ENCODE measurements at regions of chr17 and their contacts with region 1.

Region 1: DNA sequence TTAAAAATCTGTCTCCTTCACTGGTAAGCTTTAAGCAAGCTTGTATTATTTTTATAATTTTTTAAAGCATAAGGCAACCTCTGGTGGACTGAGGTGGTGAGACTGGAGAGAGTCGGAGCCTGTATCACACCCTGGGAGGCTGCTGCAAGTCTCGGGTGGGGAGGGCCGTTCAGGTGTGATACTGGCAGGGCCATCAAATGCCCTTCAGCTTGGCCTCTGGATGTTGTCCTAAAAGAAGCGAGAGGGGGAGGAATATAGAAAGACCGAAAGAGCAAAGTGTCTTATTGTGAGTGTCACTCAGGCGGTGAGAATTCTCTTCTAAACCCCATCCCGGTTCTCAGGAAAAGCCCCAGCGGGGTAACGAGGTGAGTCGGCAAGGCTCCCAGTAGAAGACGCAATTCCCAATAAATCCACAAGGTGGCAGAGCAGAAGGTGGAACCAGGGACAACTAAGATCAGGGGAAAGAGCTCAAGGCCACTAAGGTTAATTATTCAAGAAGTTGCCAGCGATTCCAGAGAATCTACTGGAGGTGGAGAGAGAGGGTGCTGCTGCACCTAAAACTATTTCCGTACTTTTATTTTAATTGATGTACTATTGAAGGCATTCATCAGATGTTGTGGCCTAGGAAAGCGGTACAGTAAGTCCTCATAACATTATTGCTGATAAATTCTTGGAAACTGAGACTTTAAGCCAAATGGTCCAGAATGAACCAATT is 14.1 kb downstream of the C17orf67 start:
- DNase-seq: peak; percentile 18
- H3K4me3 ChIP-seq: no peak overlapping the region
- H3K27ac ChIP-seq: no peak overlapping the region
- H3K27me3 ChIP-seq: no peaks in the 10 kb centered on the region
- CTCF ChIP-seq: peak; percentile 80

Region 2: DNA sequence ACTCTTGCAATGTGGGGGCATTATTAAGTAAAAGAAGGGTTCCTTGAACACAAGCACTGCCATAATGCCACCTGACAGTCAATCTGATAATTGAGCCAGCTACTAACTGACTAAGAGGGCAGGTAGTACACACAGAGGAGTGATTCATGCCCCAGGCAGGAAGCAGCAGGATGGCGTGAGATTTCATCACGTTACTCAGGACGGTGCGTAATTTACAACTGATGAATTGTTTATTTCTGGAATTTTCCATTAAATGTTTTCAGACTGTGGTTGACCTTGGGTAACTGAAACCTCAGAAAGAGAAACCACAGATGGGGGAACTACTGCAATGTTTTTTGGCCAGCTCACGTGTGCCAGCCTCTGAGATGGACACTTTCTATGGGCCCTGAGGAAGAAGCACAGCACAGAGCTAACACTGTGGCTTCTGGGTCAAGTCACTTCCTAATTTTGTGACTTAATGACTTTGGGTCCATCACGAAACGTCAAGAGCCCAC is 32.6 kb before region 1 on chr17:
- CTCF ChIA-PET with region 1: interaction called, 11 read pairs
- POLR2A ChIA-PET with region 1: interaction called, 5 read pairs
- DNase-seq: peak; percentile 91
- H3K4me3 ChIP-seq: no peak overlapping the region
- H3K27ac ChIP-seq: peak overlapping the region; percentile 79
- H3K27me3 ChIP-seq: no peaks in the 10 kb centered on the region
- CTCF ChIP-seq: no peak

Region 3: GRCh38 chr17:56808503-56808902 is 11.1 kb before region 1 on chr17:
- CTCF ChIA-PET with region 1: interaction called, 17 read pairs
- POLR2A ChIA-PET with region 1: no interaction called
- DNase-seq: no peak
- H3K4me3 ChIP-seq: no peak overlapping the region
- H3K27ac ChIP-seq: no peak overlapping the region
- H3K27me3 ChIP-seq: no peaks in the 10 kb centered on the region
- CTCF ChIP-seq: no peak

Region 4: GRCh38 chr17:56833809-56834379 is 14.3 kb after region 1 on chr17 and contains the starts of genes C17orf67 and DGKE:
- CTCF ChIA-PET with region 1: interaction called, 28 read pairs
- POLR2A ChIA-PET with region 1: no interaction called
- DNase-seq: peak; percentile 88
- H3K4me3 ChIP-seq: peak within 1 kb of the TSS; percentile 89
- H3K27ac ChIP-seq: peak within 1 kb of the TSS; percentile 41
- H3K27me3 ChIP-seq: no peaks in the 10 kb centered on the region
- CTCF ChIP-seq: no peak
- polyA plus RNA-seq, gene C17orf67: 0.42 and 0.76 TPM in 2 replicates
- polyA plus RNA-seq, gene DGKE: 2.3 and 3.2 TPM in 2 replicates

Region 5: DNA sequence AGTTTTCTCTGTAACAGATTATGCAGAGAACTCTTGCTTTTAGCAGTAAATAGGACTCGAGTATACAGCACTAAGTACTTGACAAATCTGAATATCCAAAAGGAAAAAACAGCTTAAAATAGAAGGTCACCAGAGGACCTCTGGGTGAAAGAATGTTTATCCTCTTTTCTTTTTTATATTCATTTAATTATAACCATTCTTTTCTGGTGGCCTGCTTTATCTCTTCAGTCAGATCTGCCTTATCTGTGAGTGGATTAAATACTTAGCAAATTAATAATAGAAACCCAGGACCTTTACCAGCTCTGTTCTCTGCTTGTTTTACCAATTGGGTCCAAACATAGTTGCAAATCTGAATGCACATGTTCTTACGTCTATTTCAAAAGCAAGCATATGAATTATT is 23.0 kb after region 1 on chr17:
- CTCF ChIA-PET with region 1: interaction called, 18 read pairs
- POLR2A ChIA-PET with region 1: no interaction called
- DNase-seq: no peak
- H3K4me3 ChIP-seq: no peak overlapping the region
- H3K27ac ChIP-seq: no peak overlapping the region
- H3K27me3 ChIP-seq: no peaks in the 10 kb centered on the region
- CTCF ChIP-seq: no peak

Region 6: GRCh38 chr17:56930739-56931337 is 111.2 kb after region 1 on chr17:
- CTCF ChIA-PET with region 1: interaction called, 10 read pairs
- POLR2A ChIA-PET with region 1: no interaction called
- DNase-seq: no peak
- H3K4me3 ChIP-seq: no peak overlapping the region
- H3K27ac ChIP-seq: no peak overlapping the region
- H3K27me3 ChIP-seq: no peaks in the 10 kb centered on the region
- CTCF ChIP-seq: no peak

Region 7: GRCh38 chr17:56939901-56940343 is 120.3 kb after region 1 on chr17:
- CTCF ChIA-PET with region 1: interaction called, 70 read pairs
- POLR2A ChIA-PET with region 1: no interaction called
- DNase-seq: peak; percentile 20
- H3K4me3 ChIP-seq: no peak overlapping the region
- H3K27ac ChIP-seq: no peak overlapping the region
- H3K27me3 ChIP-seq: no peaks in the 10 kb centered on the region
- CTCF ChIP-seq: peak; percentile 75